Panc1 (cell line): ENCODE measurements at regions of chrX and their contacts with region 1.

Region 1: GRCh38 chrX:49276671-49277534 is 7.3 kb downstream of the PPP1R3F start:
- DNase-seq: no peak
- ATAC-seq: 0 out of 2 replicates have a peak, but pooled peaks have one; percentile 26
- H3K4me3 ChIP-seq: no peak overlapping the region
- H3K27ac ChIP-seq: no peak overlapping the region
- H3K4me1 ChIP-seq: peaks cover 8% of the 10 kb centered on the region
- H3K27me3 ChIP-seq: no peaks in the 10 kb centered on the region
- CTCF ChIP-seq: no peak

Region 2: GRCh38 chrX:49100704-49101628 is 175.9 kb before region 1 on chrX:
- CTCF ChIA-PET with region 1: no interaction called
- POLR2A ChIA-PET with region 1: no interaction called
- in situ Hi-C with region 1: no loop called
- intact Hi-C with region 1: no loop called
- DNase-seq: peak; percentile 78
- ATAC-seq: peak; percentile 93
- H3K4me3 ChIP-seq: peak overlapping the region; percentile 74 to 90
- H3K27ac ChIP-seq: peak overlapping the region; percentile 94
- H3K4me1 ChIP-seq: peaks cover 4% of the 10 kb centered on the region; the same call in 1 of the 2 replicates
- H3K27me3 ChIP-seq: no peaks in the 10 kb centered on the region
- CTCF ChIP-seq: no peak

Region 3: GRCh38 chrX:49191033-49191871 is 85.7 kb before region 1 on chrX:
- CTCF ChIA-PET with region 1: no interaction called
- POLR2A ChIA-PET with region 1: no interaction called
- in situ Hi-C with region 1: no loop called
- intact Hi-C with region 1: loop called (anchors 5 kb)
- DNase-seq: peak; percentile 97
- ATAC-seq: peak; percentile 89
- H3K4me3 ChIP-seq: peak overlapping the region; percentile 74 to 75
- H3K27ac ChIP-seq: peak overlapping the region; percentile 85
- H3K4me1 ChIP-seq: peaks cover 21% of the 10 kb centered on the region
- H3K27me3 ChIP-seq: no peaks in the 10 kb centered on the region
- CTCF ChIP-seq: no peak